ENCODE measurements at regions of chr6 and their contacts with region 1.

Region 1: GRCh38 chr6:30883685-30884520 is at the start of gene DDR1:
- DNase-seq: no peak
- H3K4me3 ChIP-seq: peak within 1 kb of the TSS; percentile 83
- H3K27ac ChIP-seq: no peak within 1 kb of the TSS
- H3K27me3 ChIP-seq: no peaks in the 10 kb centered on the region
- CTCF ChIP-seq: no peak
- polyA plus RNA-seq, gene DDR1: 9.9 and 13.3 TPM in 2 replicates

Region 2: DNA sequence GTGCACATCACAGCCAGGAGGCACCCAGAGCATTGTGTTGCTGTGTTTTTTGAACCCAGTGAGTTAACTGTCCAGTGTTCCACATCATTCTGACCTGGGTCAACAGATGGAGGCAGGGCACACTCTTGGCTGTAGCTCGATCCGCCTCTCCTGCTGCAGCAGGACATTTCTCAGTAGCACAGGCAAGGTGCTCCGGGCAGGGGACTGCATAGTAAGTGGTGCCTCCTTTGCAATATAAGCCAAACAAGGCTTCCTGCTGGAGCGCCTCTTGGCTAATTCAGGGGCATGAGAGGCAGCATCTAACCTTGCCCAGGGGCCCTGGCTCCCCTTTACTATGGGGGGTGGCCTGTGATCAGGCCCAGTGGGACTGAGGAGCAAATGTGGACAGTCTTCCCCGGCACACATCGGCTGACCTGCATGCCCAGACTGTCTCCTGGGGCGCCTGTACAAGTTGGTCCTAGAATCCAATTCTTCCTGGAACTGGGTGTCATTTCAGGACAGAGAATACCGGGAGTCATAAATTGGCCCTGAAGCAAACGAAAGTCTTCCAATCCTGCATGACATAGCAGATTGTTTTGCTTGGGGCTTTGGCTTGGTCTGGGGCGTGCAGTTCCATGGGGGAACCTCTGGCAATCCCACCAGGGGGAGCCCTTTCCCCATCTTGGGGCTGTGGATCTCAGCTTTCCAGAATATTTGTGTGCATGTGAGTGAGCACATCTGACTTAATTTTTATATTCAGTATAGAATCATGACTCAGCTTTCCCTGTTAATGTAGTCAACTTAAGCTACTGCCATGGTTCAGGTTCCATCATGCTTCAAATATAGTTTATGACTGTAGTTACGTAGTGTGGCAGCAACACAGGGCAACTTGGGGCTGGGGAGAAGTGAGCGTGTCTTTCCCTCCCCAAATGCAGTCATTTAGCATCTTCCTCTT is 55.6 kb before region 1 on chr6:
- CTCF ChIA-PET with region 1: interaction called, 50 read pairs
- POLR2A ChIA-PET with region 1: interaction called, 5 read pairs
- DNase-seq: peak; percentile 84
- H3K4me3 ChIP-seq: no peak overlapping the region
- H3K27ac ChIP-seq: peak overlapping the region; percentile 78
- H3K27me3 ChIP-seq: no peaks in the 10 kb centered on the region
- CTCF ChIP-seq: peak; percentile 97